Activated T-helper 1 cell treated with anti-CD3 and anti-CD28 coated beads, Interleukin-12 subunit alpha, Interleukin-12 subunit beta, Interleukin-2, Interleukin-4 antibody, amounts not matched to agents 30 ng/mL and 10 ng/mL and 1 ng/mL, durations not matched to agents 14 hours and 24 hours and 36 hours (primary cell): ENCODE measurements at regions of chr2 and their contacts with region 1.

Region 1: DNA sequence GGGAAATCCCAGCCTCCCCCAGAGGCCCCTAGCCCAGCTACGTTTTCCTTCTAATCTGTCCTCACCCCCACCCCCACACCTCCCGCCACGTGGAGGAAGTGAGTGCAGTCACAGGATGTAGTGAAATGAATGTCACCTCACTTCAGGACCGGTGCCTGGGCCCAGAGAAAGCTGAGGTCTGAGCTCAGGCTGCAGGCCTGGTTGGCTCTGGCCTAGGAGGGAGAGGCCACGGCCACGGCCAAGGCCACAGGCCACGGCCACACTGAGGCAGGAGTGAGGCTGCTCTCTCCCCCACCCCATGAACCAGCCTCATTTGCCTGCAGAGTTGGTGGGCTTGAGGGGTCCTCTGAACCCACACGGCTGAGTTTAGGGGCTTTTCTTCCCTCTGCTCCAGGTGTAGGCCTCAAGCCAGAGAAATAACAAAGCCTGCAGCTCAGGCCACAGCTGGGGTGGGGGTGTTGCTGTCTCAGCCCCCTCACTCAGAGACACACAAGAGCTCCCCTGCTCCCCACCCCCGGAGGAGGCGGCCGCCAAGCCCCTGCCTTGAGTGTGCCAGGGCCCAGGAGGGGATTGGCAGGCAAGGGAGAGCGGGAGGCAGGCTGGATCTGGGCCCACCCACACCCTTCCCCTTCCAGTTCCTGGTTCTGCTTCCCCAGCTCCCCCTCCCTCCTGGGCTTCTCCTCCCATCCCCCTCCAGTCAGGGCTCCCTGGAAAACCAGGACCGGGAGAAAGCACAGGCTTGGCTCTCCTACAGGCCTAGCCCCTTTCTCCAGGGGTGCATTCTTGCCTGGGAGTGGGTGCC is 27.0 kb downstream of the DNMT3A start:
- DNase-seq: peak; percentile 80
- H3K4me3 Mint-ChIP-seq: peak overlapping the region; percentile 83
- H3K27ac Mint-ChIP-seq: peak overlapping the region; percentile 97
- H3K4me1 Mint-ChIP-seq: peaks cover 56% of the 10 kb centered on the region
- H3K27me3 Mint-ChIP-seq: no peaks in the 10 kb centered on the region

Region 2: DNA sequence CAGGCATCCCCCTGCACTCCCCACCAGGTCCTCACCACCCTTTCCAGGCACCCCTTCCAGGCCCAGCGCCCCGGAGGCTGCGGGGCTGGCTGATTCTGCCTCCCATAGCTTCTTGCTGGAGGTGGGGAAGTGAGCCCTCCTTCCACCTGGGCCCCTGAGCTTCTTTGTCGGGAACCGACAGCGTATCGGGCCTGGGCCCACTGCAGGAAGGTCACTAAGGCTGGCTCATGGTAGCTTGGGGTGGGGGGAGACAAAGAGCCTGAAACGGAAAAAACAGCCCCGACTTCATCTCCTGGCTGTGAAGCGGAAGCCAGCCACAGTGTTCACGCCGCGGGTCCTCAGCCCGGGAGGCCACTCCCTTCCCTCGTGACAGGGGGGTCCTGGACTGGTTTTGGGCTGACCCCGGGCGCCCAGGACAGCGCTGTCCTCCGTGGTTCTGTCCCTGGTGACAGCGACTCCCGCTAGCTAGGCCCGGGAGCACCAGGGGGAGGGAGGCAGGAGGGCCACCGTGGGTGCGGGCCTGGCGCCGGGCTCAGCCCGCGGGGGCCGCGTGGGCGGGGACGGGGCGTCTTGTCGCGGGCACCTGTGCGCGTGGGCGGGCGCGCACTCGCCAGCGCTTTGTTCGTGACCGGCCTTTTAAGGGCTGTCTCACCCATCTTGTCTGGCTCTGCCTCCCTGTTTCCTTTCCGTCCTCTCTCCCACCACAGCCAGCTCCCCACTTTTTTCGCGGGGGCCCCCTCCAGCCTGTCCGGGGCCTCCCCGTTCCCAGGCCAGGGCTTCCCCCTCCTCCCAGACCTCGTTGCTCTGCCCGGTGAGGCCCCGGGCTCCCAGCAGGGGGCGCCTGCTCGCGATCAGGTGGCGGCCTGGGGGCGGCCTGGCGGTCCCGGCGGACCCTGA is 37.9 kb before region 1 on chr2:
- intact Hi-C with region 1: loop called (anchors 1 kb)
- DNase-seq: peak; percentile 73
- H3K4me3 Mint-ChIP-seq: peak overlapping the region; percentile 53
- H3K27ac Mint-ChIP-seq: peak overlapping the region; percentile 81
- H3K4me1 Mint-ChIP-seq: peaks cover 67% of the 10 kb centered on the region
- H3K27me3 Mint-ChIP-seq: no peaks in the 10 kb centered on the region

Region 3: GRCh38 chr2:25294573-25295462 is 19.9 kb before region 1 on chr2:
- intact Hi-C with region 1: loop called (anchors 1 kb)
- DNase-seq: peak; percentile 77
- H3K4me3 Mint-ChIP-seq: peak overlapping the region; percentile 62
- H3K27ac Mint-ChIP-seq: peak overlapping the region; percentile 90
- H3K4me1 Mint-ChIP-seq: peaks cover 44% of the 10 kb centered on the region
- H3K27me3 Mint-ChIP-seq: no peaks in the 10 kb centered on the region

Region 4: GRCh38 chr2:25301453-25302352 is 13.0 kb before region 1 on chr2:
- intact Hi-C with region 1: loop called (anchors 1 kb)
- DNase-seq: peak; percentile 76
- H3K4me3 Mint-ChIP-seq: peak overlapping the region; percentile 53
- H3K27ac Mint-ChIP-seq: peak overlapping the region; percentile 40
- H3K4me1 Mint-ChIP-seq: peaks cover 40% of the 10 kb centered on the region
- H3K27me3 Mint-ChIP-seq: no peaks in the 10 kb centered on the region

Region 5: DNA sequence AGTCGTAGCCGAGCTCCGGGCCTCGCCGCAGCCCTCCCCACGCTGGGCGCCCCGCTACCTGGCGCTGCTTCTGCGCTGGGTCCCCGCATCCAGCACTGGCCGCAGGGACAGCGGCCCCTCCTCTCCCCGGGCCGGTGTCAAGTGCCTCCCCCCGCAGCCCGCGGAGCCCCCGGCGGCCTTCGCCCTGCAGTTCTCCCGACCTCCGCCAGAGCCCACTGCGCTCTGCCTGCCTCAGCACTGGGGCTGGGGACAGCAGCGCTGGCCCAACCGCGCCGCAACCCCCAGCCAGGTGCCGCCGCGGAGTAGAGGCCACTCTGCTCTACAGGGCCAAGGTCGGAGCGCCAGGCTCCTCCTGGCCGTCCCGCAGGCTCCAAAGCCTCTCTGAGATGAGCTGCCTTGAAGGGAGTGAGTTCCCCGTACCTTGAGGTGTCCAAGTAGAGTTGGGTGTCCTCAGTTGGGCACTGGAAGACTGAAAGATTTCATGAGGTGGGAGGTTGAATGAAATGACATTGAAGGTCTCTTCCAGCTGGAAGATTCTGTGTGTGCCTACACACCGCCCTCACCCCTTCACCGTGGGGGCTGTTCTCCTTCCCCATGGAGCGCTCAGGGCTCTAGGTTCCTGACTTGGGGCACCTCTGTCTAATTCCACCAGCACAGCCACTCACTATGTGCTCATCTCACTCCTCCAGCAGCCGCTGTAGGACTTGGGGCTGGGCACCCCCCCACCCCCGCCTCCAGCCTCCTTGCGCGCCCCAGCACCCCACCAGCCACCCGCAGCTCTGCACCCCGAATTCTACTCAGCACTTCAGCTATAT is 27.9 kb after region 1 on chr2:
- intact Hi-C with region 1: loop called (anchors 1 kb)
- DNase-seq: peak; percentile 79
- H3K4me3 Mint-ChIP-seq: peak overlapping the region; percentile 88
- H3K27ac Mint-ChIP-seq: peak overlapping the region; percentile 88
- H3K4me1 Mint-ChIP-seq: peaks cover 37% of the 10 kb centered on the region
- H3K27me3 Mint-ChIP-seq: peaks cover 5% of the 10 kb centered on the region

Region 6: GRCh38 chr2:25362049-25362433 is 47.3 kb after region 1 on chr2:
- intact Hi-C with region 1: loop called (anchors 1 kb)
- DNase-seq: peak; percentile 93
- H3K4me3 Mint-ChIP-seq: peak overlapping the region; percentile 84
- H3K27ac Mint-ChIP-seq: peak overlapping the region; percentile 94
- H3K4me1 Mint-ChIP-seq: peaks cover 26% of the 10 kb centered on the region
- H3K27me3 Mint-ChIP-seq: peaks cover 2% of the 10 kb centered on the region

Region 7: DNA sequence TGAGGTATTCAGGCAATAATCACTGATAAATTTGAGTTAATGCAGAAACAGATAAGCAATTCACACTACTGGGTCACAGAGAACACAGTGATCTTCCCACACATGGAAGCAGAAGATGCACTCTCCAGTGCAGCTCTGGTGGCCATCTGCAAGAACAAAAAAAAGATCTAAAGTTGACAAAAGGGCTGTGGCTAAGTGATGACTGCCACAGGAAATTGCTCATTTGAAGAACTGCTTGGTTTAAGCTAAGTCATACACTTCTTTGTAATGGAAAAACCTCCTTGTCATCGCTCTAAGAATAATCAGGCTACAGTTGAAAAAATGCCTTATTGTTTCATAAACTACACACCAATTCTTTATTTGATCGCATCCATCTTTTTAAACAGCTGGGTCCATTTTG is 243.5 kb after region 1 on chr2:
- intact Hi-C with region 1: loop called (anchors 1 kb)
- DNase-seq: peak; percentile 53
- H3K4me3 Mint-ChIP-seq: peak overlapping the region; percentile 46
- H3K27ac Mint-ChIP-seq: peak overlapping the region; percentile 98
- H3K4me1 Mint-ChIP-seq: peaks cover 63% of the 10 kb centered on the region
- H3K27me3 Mint-ChIP-seq: no peaks in the 10 kb centered on the region